Activated B cell treated with CpG ODN at 0.5 μM for 24 hours (primary cell): ENCODE measurements at regions of chr10 and their contacts with region 1.

Region 1: DNA sequence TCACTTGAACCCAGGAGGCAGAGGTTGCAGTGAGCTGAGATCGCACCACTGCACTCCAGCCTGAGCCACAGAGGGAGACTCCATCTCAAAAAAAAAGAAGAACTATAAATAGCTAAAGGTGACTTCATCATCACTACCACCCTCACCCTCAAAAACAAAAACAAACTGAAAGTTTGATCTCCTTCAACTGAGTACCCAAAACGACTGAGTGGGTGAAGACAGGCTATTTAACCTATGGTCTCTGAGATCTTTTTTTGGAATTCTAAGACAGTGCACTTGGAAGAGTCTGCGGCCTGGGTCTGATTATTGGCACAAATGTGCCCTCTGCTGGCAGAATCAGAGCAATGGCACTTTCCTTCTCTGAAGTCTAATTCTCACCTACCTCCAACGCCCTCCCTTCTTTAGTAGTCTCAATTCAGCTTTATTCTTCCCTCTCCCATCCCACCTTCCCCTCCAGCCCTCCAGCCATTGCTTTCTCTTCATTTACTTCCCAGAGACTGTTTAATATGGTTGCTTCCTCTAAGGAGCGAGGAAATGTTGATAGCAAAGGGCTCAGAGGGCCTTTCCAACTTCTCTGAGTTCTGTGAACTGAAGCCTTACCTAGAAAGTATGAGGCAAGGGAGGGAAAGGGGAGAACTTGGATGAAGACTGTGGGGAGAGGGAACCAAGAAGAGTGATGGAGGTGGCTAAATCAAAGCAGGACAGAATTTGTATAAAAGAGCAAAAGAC is 2.9 kb upstream of the MYOZ1 start:
- DNase-seq: no peak
- ATAC-seq: peak; percentile 69
- H3K4me3 Mint-ChIP-seq: peak overlapping the region; percentile 65
- H3K27ac Mint-ChIP-seq: peak overlapping the region; percentile 26
- H3K4me1 Mint-ChIP-seq: peaks cover 13% of the 10 kb centered on the region
- H3K27me3 Mint-ChIP-seq: peaks cover 4% of the 10 kb centered on the region
- CTCF ChIP-seq: peak; percentile 62

Region 2: DNA sequence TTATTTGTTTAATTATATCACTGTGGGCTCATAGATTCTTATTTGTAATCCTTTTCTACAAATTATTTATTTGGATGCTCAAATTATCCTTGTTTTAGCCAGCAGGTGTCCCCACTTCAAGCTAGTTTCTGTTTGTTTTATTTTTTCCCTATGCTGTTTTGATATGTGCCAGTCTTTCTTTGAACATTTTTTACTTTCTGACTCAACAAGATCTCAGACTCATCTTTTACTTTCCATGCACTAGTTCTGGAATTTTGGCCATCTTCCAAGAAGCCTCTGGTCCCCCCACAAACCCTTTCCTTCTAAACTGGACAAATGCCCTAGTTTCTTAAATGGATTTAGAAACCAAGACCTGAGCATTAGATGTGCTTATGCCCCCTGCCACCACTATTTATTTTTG is 380.2 kb before region 1 on chr10:
- CTCF ChIA-PET with region 1: interaction called, 13 read pairs
- POLR2A ChIA-PET with region 1: no interaction called
- intact Hi-C with region 1: loop called (anchors 1 kb)
- DNase-seq: no peak
- ATAC-seq: no peak
- H3K4me3 Mint-ChIP-seq: no peak overlapping the region
- H3K27ac Mint-ChIP-seq: no peak overlapping the region
- H3K4me1 Mint-ChIP-seq: no peaks in the 10 kb centered on the region
- H3K27me3 Mint-ChIP-seq: no peaks in the 10 kb centered on the region
- CTCF ChIP-seq: no peak

Region 3: GRCh38 chr10:74035303-74035702 is 391.1 kb after region 1 on chr10:
- CTCF ChIA-PET with region 1: no interaction called
- POLR2A ChIA-PET with region 1: no interaction called
- intact Hi-C with region 1: no loop called
- DNase-seq: no peak
- ATAC-seq: no peak
- H3K4me3 Mint-ChIP-seq: no peak overlapping the region
- H3K27ac Mint-ChIP-seq: peak overlapping the region; percentile 56
- H3K4me1 Mint-ChIP-seq: peaks cover 37% of the 10 kb centered on the region
- H3K27me3 Mint-ChIP-seq: no peaks in the 10 kb centered on the region
- CTCF ChIP-seq: no peak